K562 (cell line): ENCODE measurements at regions of chr19 and their contacts with region 1.

Region 1: DNA sequence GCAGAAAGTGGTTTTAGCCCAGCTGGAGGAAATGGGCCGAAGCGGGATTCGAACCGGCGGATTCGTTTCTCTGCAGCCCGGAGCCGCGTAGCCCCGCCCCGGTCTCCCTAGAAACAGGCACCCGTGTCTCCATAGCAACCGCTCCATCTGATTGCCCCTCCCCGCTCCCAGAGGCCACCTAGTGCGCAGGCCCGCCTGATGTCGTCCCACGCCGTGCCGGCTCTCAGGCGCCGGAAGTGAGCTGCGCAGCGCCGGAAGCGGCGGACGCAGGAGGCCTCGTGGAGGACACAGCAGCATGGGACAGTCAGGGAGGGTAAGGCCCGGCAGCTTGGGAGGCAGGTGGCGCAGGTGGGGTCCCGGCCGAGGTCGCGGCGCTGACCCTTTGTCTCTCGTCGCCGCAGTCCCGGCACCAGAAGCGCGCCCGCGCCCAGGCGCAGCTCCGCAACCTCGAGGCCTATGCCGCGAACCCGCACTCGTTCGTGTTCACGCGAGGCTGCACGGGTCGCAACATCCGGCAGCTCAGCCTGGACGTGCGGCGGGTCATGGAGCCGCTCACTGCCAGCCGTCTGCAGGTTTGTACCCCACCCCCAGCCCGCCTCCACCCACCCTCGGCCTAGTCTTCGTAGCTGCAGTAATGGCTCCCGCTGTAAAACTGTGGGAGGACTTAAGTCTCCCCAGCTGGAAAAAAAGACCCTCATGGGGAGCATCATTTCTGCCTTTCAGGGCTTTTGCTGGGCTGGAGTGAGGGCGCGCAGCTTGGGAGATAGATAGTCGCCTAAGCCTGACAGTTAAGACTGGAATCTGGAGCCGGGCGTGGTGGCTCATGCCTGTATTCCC is at the start of gene PPAN:
- DNase-seq: peak; percentile 95 to 100 (median 98)
- ATAC-seq: peak; percentile 97
- H3K4me3 ChIP-seq: peak within 1 kb of the TSS; percentile 77
- H3K27ac ChIP-seq: peak within 1 kb of the TSS; percentile 96
- H3K4me1 ChIP-seq: peaks cover 34 to 62% of the 10 kb centered on the region in 2 experiments
- H3K27me3 ChIP-seq: no peaks in the 10 kb centered on the region
- CTCF ChIP-seq: no peak
- EP300 ChIP-seq: no peak
- POLR2A ChIP-seq: peak; percentile 88
- RAD21 ChIP-seq: no peak
- polyA plus RNA-seq, gene PPAN: 2.2 to 4.9 TPM

Region 2: DNA sequence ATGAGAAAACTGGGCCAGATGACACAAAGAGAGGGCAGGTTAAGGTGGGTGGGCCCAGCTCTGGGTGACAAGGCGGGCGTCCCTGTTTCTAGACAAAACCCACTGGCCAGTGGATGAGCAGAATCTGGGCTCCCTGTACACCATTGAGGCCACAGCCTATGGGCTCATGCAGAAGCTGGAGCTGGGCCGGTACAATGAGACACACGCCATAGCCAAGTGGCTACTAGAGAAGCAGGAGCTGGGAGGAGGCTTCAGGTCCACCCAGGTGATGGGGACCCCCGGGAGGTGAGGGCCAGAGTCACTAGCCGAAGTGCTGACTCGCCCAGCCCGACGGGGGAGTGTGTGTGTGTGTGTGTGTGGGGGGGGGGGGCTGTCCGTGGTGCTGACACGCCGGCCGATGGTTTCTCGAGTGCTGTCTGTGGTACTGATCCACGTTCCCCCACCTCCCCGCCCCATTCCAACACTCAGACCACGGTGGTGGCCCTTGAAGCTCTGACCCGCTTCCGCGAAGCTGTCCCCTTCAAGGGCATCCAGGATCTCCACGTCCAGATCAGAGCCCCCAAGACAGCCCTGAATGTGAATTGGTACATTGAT is 44.5 kb before region 1 on chr19:
- CTCF ChIA-PET with region 1: no interaction called
- POLR2A ChIA-PET with region 1: no interaction called
- in situ Hi-C with region 1: no loop called
- intact Hi-C with region 1: no loop called
- DNase-seq: peak; percentile 52 to 86 (median 80)
- ATAC-seq: peak; percentile 80
- H3K4me3 ChIP-seq: no peak overlapping the region
- H3K27ac ChIP-seq: no peak overlapping the region
- H3K4me1 ChIP-seq: no peaks in the 10 kb centered on the region
- H3K27me3 ChIP-seq: peaks cover 7 to 54% of the 10 kb centered on the region in 2 experiments
- CTCF ChIP-seq: no peak
- EP300 ChIP-seq: no peak
- POLR2A ChIP-seq: no peak
- RAD21 ChIP-seq: no peak

Region 3: DNA sequence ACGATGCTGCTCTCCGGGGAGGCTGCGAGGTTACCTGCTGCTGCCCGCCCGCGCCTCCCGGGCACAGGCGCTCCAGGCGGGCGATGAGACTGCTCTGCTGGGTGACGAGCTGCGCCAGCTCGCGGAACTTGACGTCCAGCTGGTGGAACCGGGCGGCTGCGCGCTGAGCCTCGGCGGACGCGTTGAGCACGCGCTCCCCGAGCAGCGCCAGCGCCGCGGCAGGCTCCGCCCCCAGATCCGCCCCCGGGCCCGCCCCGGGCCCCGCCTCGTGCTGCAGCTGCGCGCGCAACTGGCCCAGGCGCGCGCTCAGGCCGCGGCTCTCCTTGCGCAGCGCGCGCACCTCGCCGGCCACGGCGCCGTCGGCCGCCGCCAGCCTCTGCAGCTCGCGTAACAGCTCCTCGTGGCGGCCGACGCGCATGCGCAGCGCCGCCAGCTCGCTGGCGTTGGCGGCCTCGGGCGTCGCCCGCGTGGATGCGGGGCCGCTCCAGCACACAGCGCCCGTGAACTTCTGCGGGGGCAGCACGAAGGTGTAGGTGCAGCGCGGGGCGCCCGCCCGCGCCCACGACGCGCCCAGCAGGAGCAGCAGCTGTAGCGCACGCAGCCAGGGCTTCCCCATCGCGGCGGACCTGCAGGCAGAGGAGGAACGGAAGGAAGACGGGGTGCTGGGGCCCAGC is 10.2 kb before region 1 on chr19:
- CTCF ChIA-PET with region 1: no interaction called
- POLR2A ChIA-PET with region 1: interaction called, 19 read pairs
- in situ Hi-C with region 1: no loop called
- intact Hi-C with region 1: no loop called
- DNase-seq: peak; percentile 94 to 99 (median 98)
- ATAC-seq: peak; percentile 92
- H3K4me3 ChIP-seq: peak overlapping the region; percentile 38
- H3K27ac ChIP-seq: peak overlapping the region; percentile 79
- H3K4me1 ChIP-seq: peaks cover 24 to 44% of the 10 kb centered on the region in 2 experiments
- H3K27me3 ChIP-seq: no peaks in the 10 kb centered on the region
- CTCF ChIP-seq: no peak
- EP300 ChIP-seq: no peak
- POLR2A ChIP-seq: peak; percentile 77
- RAD21 ChIP-seq: no peak

Region 4: DNA sequence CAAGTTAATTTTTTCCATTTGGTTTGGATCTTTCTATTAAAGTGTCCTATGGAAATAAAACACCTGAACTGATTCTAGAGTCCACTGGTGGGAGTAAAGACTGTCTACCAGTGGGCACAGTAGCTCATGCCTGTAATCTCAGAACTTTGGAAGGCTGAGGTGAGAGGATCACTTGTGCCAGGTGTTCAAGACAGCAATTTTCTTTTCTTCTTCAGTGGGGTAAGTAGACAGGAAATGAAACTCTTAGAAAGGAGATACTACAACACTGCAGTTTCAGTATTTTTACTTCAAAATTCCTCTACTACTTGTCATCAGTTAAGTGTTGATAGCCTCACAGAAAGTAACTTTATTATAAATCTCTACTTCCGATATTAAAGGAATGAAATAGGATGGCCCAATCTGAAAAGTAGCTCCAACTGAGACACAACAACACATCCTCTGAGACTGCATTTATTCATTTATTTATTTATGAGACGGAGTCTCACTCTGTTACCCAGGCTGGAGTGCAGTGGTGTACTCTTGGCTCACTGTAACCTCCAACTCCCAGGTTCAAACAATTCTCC is 62.1 kb after region 1 on chr19:
- CTCF ChIA-PET with region 1: no interaction called
- POLR2A ChIA-PET with region 1: no interaction called
- in situ Hi-C with region 1: no loop called
- intact Hi-C with region 1: no loop called
- DNase-seq: no peak
- ATAC-seq: no peak
- H3K4me3 ChIP-seq: no peak overlapping the region
- H3K27ac ChIP-seq: no peak overlapping the region
- H3K4me1 ChIP-seq: no peaks in the 10 kb centered on the region
- H3K27me3 ChIP-seq: no peaks in the 10 kb centered on the region
- CTCF ChIP-seq: no peak
- EP300 ChIP-seq: no peak
- POLR2A ChIP-seq: no peak
- RAD21 ChIP-seq: no peak